ENCODE measurements at regions of chr11 and their contacts with region 1.

Region 1: DNA sequence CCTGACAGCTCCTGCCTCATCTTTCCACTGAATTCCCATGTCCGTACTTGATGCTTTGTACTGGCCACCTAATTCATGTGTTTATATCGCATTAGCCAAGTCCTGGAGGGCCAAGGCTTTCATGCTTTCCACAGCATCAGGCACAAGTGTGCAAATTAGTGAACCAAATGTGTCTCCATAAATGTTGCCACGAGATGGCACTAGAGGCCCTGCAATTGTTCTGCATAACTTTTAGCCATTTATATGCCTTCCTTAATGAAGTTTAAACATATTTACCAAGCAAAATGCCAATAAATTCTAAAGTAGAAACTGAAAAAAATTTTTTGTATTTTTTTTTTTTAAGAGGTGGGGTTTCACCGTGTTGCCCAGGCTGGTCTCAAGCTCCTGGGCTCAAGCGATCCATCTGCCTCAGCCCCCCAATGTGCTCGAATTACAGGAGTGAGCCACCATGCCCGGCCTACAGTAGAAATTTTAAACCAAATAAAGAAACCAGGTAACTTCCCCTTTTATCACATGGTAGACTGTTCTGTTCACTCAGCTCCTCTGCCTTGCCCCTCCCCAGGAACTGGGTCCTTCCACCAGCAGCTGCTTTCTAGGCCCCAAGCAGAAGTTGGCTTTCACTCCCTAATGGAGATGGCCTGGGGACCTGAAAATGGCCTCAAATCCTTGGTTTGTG is 20.8 kb upstream of the IL18BP start:
- DNase-seq: peak in 1 of 2 experiments; percentile 52
- H3K4me3 ChIP-seq: no peak overlapping the region
- H3K27ac ChIP-seq: no peak overlapping the region
- H3K4me1 ChIP-seq: no peaks in the 10 kb centered on the region
- H3K27me3 ChIP-seq: no peaks in the 10 kb centered on the region
- CTCF ChIP-seq: peak in 2 of 3 experiments; percentile 58 to 60; a peak in 3 of 4 replicates
- EP300 ChIP-seq: no peak
- POLR2A ChIP-seq: no peak
- RAD21 ChIP-seq: peak; percentile 51 to 62

Region 2: DNA sequence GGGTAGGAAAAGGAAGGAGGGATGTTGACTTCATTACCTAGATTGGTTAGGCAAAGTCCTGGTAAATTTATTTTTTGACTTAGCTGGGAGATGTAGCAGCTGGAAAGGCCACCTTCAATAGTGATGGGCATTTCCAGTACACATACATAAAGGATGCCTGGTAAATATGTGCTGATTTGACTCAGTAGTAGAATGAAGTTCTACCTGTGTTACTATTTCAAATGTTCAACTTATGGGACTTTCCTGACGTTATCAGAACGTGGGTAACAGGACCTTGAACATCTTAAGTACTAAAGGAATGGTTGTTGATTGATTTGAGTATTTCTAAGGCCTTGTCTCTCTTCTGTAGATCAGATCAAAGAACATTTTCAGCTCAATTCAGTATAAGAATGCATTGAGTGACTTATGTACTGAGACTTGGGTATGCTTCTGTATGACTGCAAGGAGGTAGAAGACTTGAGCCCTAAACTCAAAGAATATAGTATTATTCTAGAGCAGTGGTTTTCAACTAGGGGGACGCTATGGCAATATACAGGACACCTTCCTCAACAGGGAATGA is 21.9 kb before region 1 on chr11:
- CTCF ChIA-PET with region 1: interaction called, 25 read pairs
- POLR2A ChIA-PET with region 1: interaction called, 3 read pairs
- DNase-seq: no peak
- H3K4me3 ChIP-seq: no peak overlapping the region
- H3K27ac ChIP-seq: no peak overlapping the region
- H3K4me1 ChIP-seq: no peaks in the 10 kb centered on the region
- H3K27me3 ChIP-seq: no peaks in the 10 kb centered on the region
- CTCF ChIP-seq: no peak
- EP300 ChIP-seq: no peak
- POLR2A ChIP-seq: no peak
- RAD21 ChIP-seq: no peak

Region 3: GRCh38 chr11:71962428-71963038 is 15.3 kb before region 1 on chr11:
- CTCF ChIA-PET with region 1: interaction called, 25 read pairs
- POLR2A ChIA-PET with region 1: no interaction called
- DNase-seq: no peak
- H3K4me3 ChIP-seq: no peak overlapping the region
- H3K27ac ChIP-seq: no peak overlapping the region
- H3K4me1 ChIP-seq: no peaks in the 10 kb centered on the region
- H3K27me3 ChIP-seq: no peaks in the 10 kb centered on the region
- CTCF ChIP-seq: no peak
- EP300 ChIP-seq: no peak
- POLR2A ChIP-seq: no peak
- RAD21 ChIP-seq: no peak

Region 4: GRCh38 chr11:71988050-71988449 is 10.2 kb after region 1 on chr11:
- CTCF ChIA-PET with region 1: interaction called, 54 read pairs
- POLR2A ChIA-PET with region 1: interaction called, 3 read pairs
- DNase-seq: no peak
- H3K4me3 ChIP-seq: no peak overlapping the region
- H3K27ac ChIP-seq: no peak overlapping the region
- H3K4me1 ChIP-seq: no peaks in the 10 kb centered on the region
- H3K27me3 ChIP-seq: no peaks in the 10 kb centered on the region
- CTCF ChIP-seq: no peak
- EP300 ChIP-seq: no peak
- POLR2A ChIP-seq: no peak
- RAD21 ChIP-seq: no peak

Region 5: DNA sequence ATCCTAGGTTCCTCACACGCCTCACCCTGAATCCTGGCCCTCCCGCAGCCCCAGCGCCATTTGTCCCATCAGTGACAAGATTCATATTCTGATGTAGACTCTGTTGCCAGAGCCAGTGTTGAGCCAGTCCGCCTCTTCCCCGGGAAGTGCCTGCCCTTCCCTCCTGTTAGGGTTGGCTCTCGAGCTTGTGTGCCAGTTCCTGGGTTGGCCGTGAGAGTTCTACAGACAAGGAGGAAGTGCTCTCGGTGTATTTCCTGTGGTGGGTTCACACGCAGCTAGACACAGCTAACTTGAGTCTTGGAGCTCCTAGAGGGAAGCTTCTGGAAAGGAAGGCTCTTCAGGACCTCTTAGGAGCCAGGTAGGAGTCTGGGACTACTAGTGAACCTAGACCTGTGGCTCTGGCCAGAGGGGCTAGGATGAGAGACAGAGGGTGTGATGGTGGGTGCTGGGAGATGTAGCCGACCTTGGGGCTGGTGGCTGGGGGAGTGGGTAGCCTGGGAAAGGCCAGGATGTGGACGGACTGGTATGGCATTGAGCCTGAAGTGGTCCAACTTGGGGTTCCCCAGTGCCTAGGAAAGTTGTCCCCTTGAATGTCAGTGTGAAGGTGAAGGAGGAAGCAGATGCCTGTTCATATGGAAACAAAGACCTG is 20.9 kb after region 1 on chr11 and contains the start of gene IL18BP:
- CTCF ChIA-PET with region 1: interaction called, 25 read pairs
- POLR2A ChIA-PET with region 1: interaction called, 4 read pairs
- DNase-seq: no peak
- H3K4me3 ChIP-seq: no peak within 1 kb of the TSS
- H3K27ac ChIP-seq: no peak within 1 kb of the TSS
- H3K4me1 ChIP-seq: no peaks in the 10 kb centered on the region
- H3K27me3 ChIP-seq: no peaks in the 10 kb centered on the region
- CTCF ChIP-seq: no peak
- EP300 ChIP-seq: no peak
- POLR2A ChIP-seq: no peak
- RAD21 ChIP-seq: no peak
- total RNA-seq, gene IL18BP: 9.8 and 10.2 TPM in 2 replicates

Region 6: GRCh38 chr11:72040726-72041441 is 63.0 kb after region 1 on chr11:
- CTCF ChIA-PET with region 1: no interaction called
- POLR2A ChIA-PET with region 1: no interaction called
- DNase-seq: peak; percentile 50 to 73
- H3K4me3 ChIP-seq: peak overlapping the region; percentile 34 to 55 (median 42); a peak in 7 of 8 replicates
- H3K27ac ChIP-seq: peak overlapping the region; percentile 92
- H3K4me1 ChIP-seq: peaks cover 29 to 36% (median 33%) of the 10 kb centered on the region in 4 experiments
- H3K27me3 ChIP-seq: no peaks in the 10 kb centered on the region
- CTCF ChIP-seq: no peak
- EP300 ChIP-seq: peak in 1 of 2 experiments; percentile 31; a peak in 1 of 3 replicates
- POLR2A ChIP-seq: peak in 1 of 2 experiments; percentile 21; a peak in 2 of 3 replicates
- RAD21 ChIP-seq: no peak

Region 7: GRCh38 chr11:72112321-72113219 is 134.7 kb after region 1 on chr11 and contains the start of gene ANAPC15:
- CTCF ChIA-PET with region 1: no interaction called
- POLR2A ChIA-PET with region 1: no interaction called
- DNase-seq: peak; percentile 94 to 96
- H3K4me3 ChIP-seq: peak within 1 kb of the TSS; percentile 78 to 94 (median 87)
- H3K27ac ChIP-seq: peak within 1 kb of the TSS; percentile 99
- H3K4me1 ChIP-seq: peaks cover 0 to 4% (median 0%) of the 10 kb centered on the region in 4 experiments; a peak in 4 of 7 replicates
- H3K27me3 ChIP-seq: peaks cover 0 to 9% (median 0%) of the 10 kb centered on the region in 4 experiments; a peak in 6 of 7 replicates
- CTCF ChIP-seq: no peak
- EP300 ChIP-seq: no peak
- POLR2A ChIP-seq: peak; percentile 97 to 100
- RAD21 ChIP-seq: peak in 1 of 2 experiments; percentile 15; a peak in 1 of 4 replicates
- total RNA-seq, gene ANAPC15: 70.0 and 74.9 TPM in 2 replicates